Mammary epithelial cell (primary cell): ENCODE measurements at regions of chr13 and their contacts with region 1.

Region 1: GRCh38 chr13:43986421-43986981 is 106.8 kb downstream of the LACC1 start:
- DNase-seq: no peak
- H3K4me3 ChIP-seq: no peak overlapping the region
- H3K27ac ChIP-seq: no peak overlapping the region
- H3K4me1 ChIP-seq: no peaks in the 10 kb centered on the region
- H3K27me3 ChIP-seq: no peaks in the 10 kb centered on the region
- CTCF ChIP-seq: no peak

Region 2: DNA sequence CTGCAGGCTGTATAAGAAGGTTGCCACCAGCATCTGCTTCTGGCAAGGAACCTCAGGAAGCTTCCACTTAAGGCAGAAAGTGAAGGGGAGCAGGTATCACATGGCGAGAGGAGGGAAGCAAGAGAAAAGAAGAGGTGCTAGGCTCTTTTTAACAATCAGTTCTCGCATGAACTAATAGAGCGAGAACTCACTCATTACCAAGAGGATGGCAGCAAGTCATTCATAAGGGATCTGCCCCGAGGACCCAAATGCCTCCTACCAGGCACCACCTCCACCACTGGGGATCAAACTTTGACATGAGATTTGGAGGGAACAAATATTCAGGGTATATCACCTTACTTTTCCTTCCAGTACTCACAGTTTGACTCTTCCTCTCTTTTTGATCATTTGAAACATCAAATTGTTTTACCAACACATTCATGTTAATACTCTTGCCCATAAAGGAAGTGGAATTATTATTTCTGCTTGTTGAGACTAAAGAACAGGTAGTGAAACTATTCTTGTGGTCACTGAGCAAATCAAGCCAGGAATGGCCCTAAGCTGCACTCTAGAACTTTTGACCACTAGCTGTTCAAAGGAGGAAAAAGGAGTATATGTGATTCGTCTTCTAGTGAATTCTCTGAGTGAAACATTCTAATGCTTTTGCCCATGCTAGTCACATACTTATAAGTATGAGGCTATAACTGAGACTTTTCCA is 61.8 kb before region 1 on chr13:
- CTCF ChIA-PET with region 1: no interaction called
- dilution Hi-C with region 1: no loop called
- in situ Hi-C with region 1: loop called in 1 of 2 experiments (anchors 10 kb)
- intact Hi-C with region 1: no loop called
- DNase-seq: no peak
- H3K4me3 ChIP-seq: no peak overlapping the region
- H3K27ac ChIP-seq: no peak overlapping the region
- H3K4me1 ChIP-seq: no peaks in the 10 kb centered on the region
- H3K27me3 ChIP-seq: no peaks in the 10 kb centered on the region
- CTCF ChIP-seq: no peak